Panc1 (cell line): ENCODE measurements at regions of chr14 and their contacts with region 1.

Region 1: DNA sequence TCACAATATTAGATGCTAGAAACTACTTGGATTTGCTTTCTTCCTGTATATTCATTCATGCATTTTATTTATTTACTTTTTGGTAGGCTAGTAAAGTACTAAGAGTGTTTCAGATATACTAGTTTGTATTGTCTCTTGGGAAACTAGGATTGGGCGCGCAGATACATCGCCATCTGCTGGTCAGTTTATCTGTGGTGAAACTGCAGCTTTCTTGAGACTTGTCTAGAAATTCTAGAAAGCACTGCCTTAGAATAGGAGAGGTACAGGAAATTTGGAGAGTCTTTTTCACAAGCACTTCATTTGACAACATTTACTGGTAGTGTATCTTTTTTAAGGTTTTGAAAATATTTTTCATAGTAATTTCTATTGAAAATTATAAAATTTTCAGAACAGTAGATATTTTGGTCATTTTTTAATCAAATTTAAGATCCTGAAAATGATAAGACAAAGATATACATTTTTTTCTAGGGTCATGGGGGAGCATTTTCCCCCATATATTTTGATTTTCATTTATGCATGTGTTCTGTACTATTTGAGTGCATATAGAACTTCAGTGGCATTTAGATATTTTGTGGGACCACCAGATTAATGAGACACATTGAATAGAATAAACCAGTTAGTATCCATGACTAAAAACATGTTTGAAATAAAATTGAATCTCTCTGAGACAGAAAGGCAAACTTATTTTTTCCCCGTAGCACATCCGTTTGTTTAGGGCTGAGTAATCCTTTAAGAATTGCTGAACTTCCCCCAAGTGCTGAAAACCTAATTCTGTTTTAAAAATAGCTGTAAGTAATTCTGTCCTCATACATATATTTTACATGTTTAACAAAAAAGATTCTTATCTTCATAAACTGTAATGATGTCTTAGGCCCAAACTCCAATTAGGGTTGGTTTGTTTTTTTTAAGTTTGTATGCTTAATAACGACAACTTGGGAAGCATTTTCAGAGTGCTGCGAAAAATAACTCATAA is 44.5 kb downstream of the SLC38A6 start:
- DNase-seq: peak; percentile 35
- ATAC-seq: peak; percentile 70; the same call in 1 of the 2 replicates
- H3K4me3 ChIP-seq: no peak overlapping the region
- H3K27ac ChIP-seq: no peak overlapping the region
- H3K4me1 ChIP-seq: no peaks in the 10 kb centered on the region
- H3K27me3 ChIP-seq: no peaks in the 10 kb centered on the region
- CTCF ChIP-seq: peak; percentile 77; the same call in 1 of the 2 replicates

Region 2: DNA sequence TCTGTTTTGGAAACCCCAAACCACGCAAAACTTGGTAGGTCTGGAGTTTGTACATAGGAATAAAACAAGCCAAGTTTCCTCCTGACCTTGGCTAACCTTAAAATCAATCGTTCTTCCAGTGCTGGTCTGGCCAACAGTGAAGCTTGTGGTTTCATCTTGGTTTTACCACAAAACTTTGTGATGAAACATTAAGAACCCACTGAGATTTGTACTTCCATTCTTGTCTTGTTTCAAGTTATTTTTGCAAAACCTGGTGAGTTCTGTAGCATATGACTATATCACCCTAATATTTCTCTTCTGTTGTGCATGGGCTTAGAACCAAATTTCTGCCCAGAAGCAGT is 402.6 kb before region 1 on chr14:
- CTCF ChIA-PET with region 1: no interaction called
- POLR2A ChIA-PET with region 1: no interaction called
- in situ Hi-C with region 1: no loop called
- intact Hi-C with region 1: loop called (anchors 1 kb)
- DNase-seq: no peak
- ATAC-seq: no peak
- H3K4me3 ChIP-seq: no peak overlapping the region
- H3K27ac ChIP-seq: no peak overlapping the region; the same call in 1 of the 2 replicates
- H3K4me1 ChIP-seq: 0 out of 2 replicates have a peak, but pooled peaks cover 3% of the 10 kb centered on the region
- H3K27me3 ChIP-seq: no peaks in the 10 kb centered on the region
- CTCF ChIP-seq: no peak

Region 3: GRCh38 chr14:60656686-60657455 is 368.7 kb before region 1 on chr14:
- CTCF ChIA-PET with region 1: no interaction called
- POLR2A ChIA-PET with region 1: no interaction called
- in situ Hi-C with region 1: no loop called
- intact Hi-C with region 1: loop called (anchors 10 kb)
- DNase-seq: no peak
- ATAC-seq: peak; percentile 87
- H3K4me3 ChIP-seq: peak overlapping the region; percentile 54 to 68
- H3K27ac ChIP-seq: peak overlapping the region; percentile 86
- H3K4me1 ChIP-seq: peaks cover 23% of the 10 kb centered on the region
- H3K27me3 ChIP-seq: no peaks in the 10 kb centered on the region
- CTCF ChIP-seq: peak; percentile 79

Region 4: DNA sequence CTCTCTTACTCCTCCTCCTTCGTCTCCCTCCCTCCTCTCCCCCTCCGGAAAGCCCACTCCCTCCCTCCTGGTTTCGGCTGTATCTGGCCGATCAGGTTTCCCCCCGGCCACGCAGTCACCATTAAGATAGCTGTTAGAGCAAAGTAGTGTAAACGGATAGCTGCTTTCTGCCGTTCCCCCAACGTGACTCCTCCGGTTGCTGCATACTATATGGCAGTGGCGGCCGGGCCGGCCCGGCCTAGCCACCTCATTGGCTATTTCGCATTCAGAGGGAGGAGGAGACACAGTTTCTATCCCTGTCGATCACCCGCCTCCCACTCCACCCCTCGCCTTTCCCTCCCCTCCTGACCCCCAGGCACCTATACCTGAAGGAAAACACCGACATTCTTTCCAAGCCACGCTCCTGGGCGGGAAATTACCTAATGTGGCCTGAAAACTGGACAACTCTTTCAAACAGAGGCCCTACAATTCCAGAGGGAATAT is 301.4 kb before region 1 on chr14 and contains the start of gene SIX4:
- CTCF ChIA-PET with region 1: no interaction called
- POLR2A ChIA-PET with region 1: no interaction called
- in situ Hi-C with region 1: no loop called
- intact Hi-C with region 1: loop called (anchors 10 kb)
- DNase-seq: peak; percentile 35
- ATAC-seq: peak; percentile 91
- H3K4me3 ChIP-seq: peak within 1 kb of the TSS; percentile 79 to 80
- H3K27ac ChIP-seq: peak within 1 kb of the TSS; percentile 89
- H3K4me1 ChIP-seq: peaks cover 11% of the 10 kb centered on the region
- H3K27me3 ChIP-seq: no peaks in the 10 kb centered on the region
- CTCF ChIP-seq: no peak
- total RNA-seq, gene SIX4: 17.3 TPM

Region 5: DNA sequence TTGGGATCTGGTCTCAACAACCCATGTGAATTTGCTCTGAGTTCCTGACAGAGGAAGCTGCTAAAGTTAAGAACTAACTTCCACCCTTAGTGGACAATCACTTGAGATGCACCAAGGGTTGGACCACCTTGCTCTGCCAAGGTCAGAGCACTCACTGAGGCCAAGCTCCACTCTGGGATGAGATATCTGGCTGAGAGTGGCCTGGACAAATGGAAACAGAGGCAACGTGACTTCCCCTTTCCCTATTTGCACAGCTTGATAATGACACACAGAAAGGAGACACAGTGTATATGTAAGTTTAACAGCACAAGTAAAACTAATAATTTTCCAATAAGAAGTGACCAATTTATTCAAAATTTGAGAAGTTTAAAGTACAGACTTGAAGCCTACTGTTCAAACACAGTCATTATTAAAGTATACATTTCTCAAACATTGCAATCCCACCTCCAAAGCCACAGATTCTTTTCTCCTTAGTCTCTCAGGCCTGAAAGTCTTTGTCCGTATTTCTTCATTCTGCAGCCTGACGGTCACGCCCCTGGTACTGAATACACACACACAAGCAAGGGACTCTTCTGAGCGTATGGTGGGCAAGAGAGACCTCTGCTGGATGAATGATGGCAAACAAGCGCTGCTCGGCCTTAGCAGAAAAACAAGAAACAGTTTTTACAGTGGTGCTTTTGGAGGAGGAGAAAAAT is 227.0 kb after region 1 on chr14:
- CTCF ChIA-PET with region 1: no interaction called
- POLR2A ChIA-PET with region 1: no interaction called
- in situ Hi-C with region 1: no loop called
- intact Hi-C with region 1: loop called (anchors 10 kb)
- DNase-seq: peak; percentile 83
- ATAC-seq: peak; percentile 98
- H3K4me3 ChIP-seq: no peak overlapping the region
- H3K27ac ChIP-seq: no peak overlapping the region
- H3K4me1 ChIP-seq: no peaks in the 10 kb centered on the region
- H3K27me3 ChIP-seq: no peaks in the 10 kb centered on the region
- CTCF ChIP-seq: peak; percentile 80